Naive thymus-derived CD4-positive, alpha-beta T cell (primary cell): ENCODE measurements at regions of chr16 and their contacts with region 1.

Region 1: GRCh38 chr16:29012913-29013553 is 28.2 kb downstream of the LAT start:
- DNase-seq: peak in 7 of 9 donors; percentile 65 to 88 (median 77)
- ATAC-seq: peak; percentile 87
- H3K4me3 ChIP-seq: no peak overlapping the region
- H3K4me3 Mint-ChIP-seq: peak overlapping the region; percentile 51 to 81 (median 62)
- H3K27ac ChIP-seq: peak overlapping the region; percentile 71
- H3K27ac Mint-ChIP-seq: peak overlapping the region; percentile 89 to 99 (median 97)
- H3K4me1 ChIP-seq: peaks cover 30 to 58% of the 10 kb centered on the region in 2 donors
- H3K4me1 Mint-ChIP-seq: peaks cover 38 to 82% (median 48%) of the 10 kb centered on the region in 7 donors
- H3K27me3 ChIP-seq: no peaks in the 10 kb centered on the region
- H3K27me3 Mint-ChIP-seq: no peaks in the 10 kb centered on the region

Region 2: DNA sequence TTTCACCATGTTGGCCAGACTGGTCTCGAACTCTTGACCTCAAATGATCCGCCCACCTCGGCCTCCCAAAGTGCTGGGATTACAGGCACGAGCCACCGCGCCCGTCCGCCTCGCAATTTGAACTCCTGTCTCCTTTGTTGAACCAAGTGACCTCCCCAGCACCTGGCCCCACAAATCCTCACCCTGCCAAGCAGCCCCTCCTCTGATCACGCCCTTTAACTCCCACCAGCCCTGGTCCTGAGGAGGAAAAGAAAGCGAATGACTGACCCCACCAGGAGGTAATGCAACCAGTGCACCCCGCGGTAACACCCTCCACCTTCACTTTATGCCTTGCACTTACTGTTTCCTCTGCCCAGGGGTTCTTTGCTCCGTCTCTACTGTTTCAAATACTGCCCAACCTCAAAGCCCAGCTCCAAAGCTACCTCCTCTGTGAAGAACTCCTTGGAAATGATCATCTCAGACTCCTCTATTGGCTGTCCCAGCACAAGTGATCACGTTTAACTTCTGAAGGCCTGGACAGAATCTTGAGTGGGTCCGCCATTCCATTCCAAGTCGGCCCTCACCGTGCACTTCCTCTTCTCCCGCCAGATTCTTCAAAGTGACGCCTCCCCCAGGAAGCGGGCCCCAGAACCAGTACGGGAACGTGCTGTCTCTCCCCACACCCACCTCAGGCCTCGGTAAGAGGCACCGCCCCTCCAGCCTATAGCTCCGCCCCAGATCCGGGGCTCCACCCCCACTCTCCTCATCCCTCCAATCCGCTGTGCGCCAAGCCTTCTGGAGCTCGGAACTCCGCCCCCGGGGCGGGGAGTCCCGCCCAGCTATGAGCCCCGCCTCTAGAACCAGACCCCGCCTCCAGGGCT is 76.9 kb before region 1 on chr16:
- CTCF ChIA-PET with region 1: no interaction called
- POLR2A ChIA-PET with region 1: no interaction called
- intact Hi-C with region 1: no loop called
- DNase-seq: peak; percentile 75 to 92 (median 86)
- ATAC-seq: peak; percentile 100
- H3K4me3 ChIP-seq: peak overlapping the region; percentile 14
- H3K4me3 Mint-ChIP-seq: peak overlapping the region; percentile 54 to 82 (median 78)
- H3K27ac ChIP-seq: peak overlapping the region; percentile 51
- H3K27ac Mint-ChIP-seq: peak overlapping the region; percentile 17 to 87 (median 74)
- H3K4me1 ChIP-seq: peaks cover 0 to 9% of the 10 kb centered on the region in 2 donors
- H3K4me1 Mint-ChIP-seq: peaks cover 13 to 23% (median 19%) of the 10 kb centered on the region in 7 donors
- H3K27me3 ChIP-seq: no peaks in the 10 kb centered on the region
- H3K27me3 Mint-ChIP-seq: peaks cover 0 to 4% (median 0%) of the 10 kb centered on the region in 5 donors

Region 3: DNA sequence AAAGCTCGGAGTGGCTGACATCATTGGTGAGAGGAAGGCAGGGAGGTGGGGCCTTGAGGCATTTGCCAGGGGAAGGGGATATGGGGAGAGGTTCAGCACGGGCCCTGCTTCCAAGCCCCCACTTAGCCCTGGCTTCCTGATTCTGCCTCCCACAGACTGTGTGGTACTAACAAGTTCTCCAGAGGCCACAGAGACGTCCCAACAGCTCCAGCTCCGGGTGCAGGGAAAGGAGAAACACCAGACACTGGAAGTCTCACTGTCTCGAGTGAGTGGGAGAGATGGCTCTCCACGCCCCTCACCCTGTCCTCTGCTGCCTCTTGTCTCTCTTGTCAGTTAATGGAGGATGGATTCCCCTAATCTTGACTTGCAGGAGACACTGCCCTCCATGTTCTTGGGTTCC is 54.2 kb before region 1 on chr16:
- CTCF ChIA-PET with region 1: no interaction called
- POLR2A ChIA-PET with region 1: no interaction called
- intact Hi-C with region 1: no loop called
- DNase-seq: no peak
- ATAC-seq: no peak
- H3K4me3 ChIP-seq: no peak overlapping the region
- H3K4me3 Mint-ChIP-seq: no peak overlapping the region
- H3K27ac ChIP-seq: no peak overlapping the region
- H3K27ac Mint-ChIP-seq: no peak overlapping the region
- H3K4me1 ChIP-seq: no peaks in the 10 kb centered on the region
- H3K4me1 Mint-ChIP-seq: peaks cover 0 to 13% (median 8%) of the 10 kb centered on the region in 7 donors
- H3K27me3 ChIP-seq: no peaks in the 10 kb centered on the region
- H3K27me3 Mint-ChIP-seq: no peaks in the 10 kb centered on the region

Region 4: DNA sequence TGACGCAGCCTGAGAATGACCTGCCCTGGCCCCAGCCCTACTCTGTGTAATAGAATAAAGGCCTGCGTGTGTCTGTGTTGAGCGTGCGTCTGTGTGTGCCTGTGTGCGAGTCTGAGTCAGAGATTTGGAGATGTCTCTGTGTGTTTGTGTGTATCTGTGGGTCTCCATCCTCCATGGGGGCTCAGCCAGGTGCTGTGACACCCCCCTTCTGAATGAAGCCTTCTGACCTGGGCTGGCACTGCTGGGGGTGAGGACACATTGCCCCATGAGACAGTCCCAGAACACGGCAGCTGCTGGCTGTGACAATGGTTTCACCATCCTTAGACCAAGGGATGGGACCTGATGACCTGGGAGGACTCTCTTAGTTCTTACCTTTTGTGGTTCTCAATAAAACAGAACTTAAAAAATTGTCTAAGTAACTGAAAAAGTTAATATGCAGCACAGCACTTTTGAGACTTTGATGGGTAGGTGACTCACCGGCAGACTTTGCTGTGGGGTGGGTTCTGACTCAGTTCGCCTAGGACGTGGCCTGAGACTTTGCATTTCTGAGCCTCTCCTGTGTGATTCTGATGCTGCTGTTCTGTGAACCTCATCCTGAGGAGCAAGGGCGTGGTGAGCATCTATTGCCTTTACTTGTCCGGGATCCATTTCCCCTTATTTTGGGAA is 22.5 kb before region 1 on chr16:
- CTCF ChIA-PET with region 1: interaction called, 8 read pairs
- POLR2A ChIA-PET with region 1: interaction called, 194 read pairs
- intact Hi-C with region 1: loop called (anchors 1 to 2 kb)
- DNase-seq: peak in 2 of 9 donors; percentile 53 to 65
- ATAC-seq: peak; percentile 32
- H3K4me3 ChIP-seq: peak overlapping the region; percentile 27
- H3K4me3 Mint-ChIP-seq: peak overlapping the region; percentile 78 to 100 (median 97)
- H3K27ac ChIP-seq: peak overlapping the region; percentile 87
- H3K27ac Mint-ChIP-seq: peak overlapping the region; percentile 89 to 99 (median 96)
- H3K4me1 ChIP-seq: peaks cover 33 to 46% of the 10 kb centered on the region in 2 donors
- H3K4me1 Mint-ChIP-seq: peaks cover 34 to 76% (median 47%) of the 10 kb centered on the region in 7 donors
- H3K27me3 ChIP-seq: no peaks in the 10 kb centered on the region
- H3K27me3 Mint-ChIP-seq: no peaks in the 10 kb centered on the region

Region 5: DNA sequence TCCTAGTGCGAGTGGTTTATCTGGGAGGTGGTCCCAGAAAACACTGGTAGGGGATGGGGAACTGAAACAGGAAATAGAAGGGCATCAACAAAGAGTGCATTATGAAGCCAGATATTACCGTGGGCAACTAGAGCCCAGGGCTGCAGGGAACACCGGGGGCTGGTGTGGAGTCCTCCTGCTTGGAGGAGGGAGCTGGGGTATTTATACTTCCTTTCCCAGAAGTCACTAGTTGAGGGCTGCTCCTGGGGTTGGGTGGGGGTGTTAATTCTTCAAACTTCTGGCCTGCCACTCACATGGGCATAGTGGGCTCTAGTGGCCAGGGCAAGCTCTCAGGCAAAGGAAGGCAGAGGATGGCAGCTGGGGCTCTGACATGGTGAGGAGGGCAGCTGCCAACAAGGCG is 13.5 kb before region 1 on chr16:
- CTCF ChIA-PET with region 1: interaction called, 5 read pairs
- POLR2A ChIA-PET with region 1: interaction called, 11 read pairs
- intact Hi-C with region 1: no loop called
- DNase-seq: no peak
- ATAC-seq: no peak
- H3K4me3 ChIP-seq: no peak overlapping the region
- H3K4me3 Mint-ChIP-seq: peak overlapping the region in 3 of 10 donors; percentile 16 to 38 (median 23)
- H3K27ac ChIP-seq: no peak overlapping the region
- H3K27ac Mint-ChIP-seq: peak overlapping the region in 7 of 9 donors; percentile 33 to 76 (median 48)
- H3K4me1 ChIP-seq: peaks cover 0 to 2% of the 10 kb centered on the region in 2 donors
- H3K4me1 Mint-ChIP-seq: peaks cover 7 to 26% (median 21%) of the 10 kb centered on the region in 7 donors
- H3K27me3 ChIP-seq: no peaks in the 10 kb centered on the region
- H3K27me3 Mint-ChIP-seq: peaks cover 0 to 2% (median 0%) of the 10 kb centered on the region in 5 donors